Activated naive CD4-positive, alpha-beta T cell treated with anti-CD3 and anti-CD28 coated beads, Interleukin-2, amount 10 ng/mL, durations not matched to agents 7 days and 5 days (primary cell): ENCODE measurements at regions of chr12 and their contacts with region 1.

Region 1: GRCh38 chr12:8045952-8046944 is 13.7 kb downstream of the FOXJ2 start:
- DNase-seq: peak; percentile 89
- H3K4me3 Mint-ChIP-seq: no peak overlapping the region
- H3K27ac Mint-ChIP-seq: no peak overlapping the region
- H3K4me1 Mint-ChIP-seq: peaks cover 9% of the 10 kb centered on the region
- H3K27me3 Mint-ChIP-seq: no peaks in the 10 kb centered on the region

Region 2: DNA sequence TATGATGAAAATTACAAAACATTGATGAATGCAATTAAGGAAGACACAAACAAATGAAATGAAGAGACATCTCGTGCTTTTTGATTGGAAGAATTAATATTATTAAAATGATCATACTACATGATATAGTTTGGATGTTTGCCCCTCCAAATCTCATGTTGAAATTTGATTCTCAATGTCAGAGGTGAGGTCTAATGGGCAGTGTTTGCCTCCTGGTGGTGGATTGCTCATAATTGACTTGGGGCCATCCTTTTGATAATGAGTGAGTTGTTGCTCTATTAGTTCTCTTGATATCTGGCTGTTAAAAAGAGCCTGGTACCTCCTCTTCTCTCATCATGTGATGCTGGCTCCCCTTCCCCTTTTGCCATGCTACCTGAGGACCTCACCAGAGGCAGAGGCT is 659.0 kb before region 1 on chr12:
- CTCF ChIA-PET with region 1: no interaction called
- DNase-seq: no peak
- H3K4me3 Mint-ChIP-seq: no peak overlapping the region
- H3K27ac Mint-ChIP-seq: no peak overlapping the region
- H3K4me1 Mint-ChIP-seq: no peaks in the 10 kb centered on the region
- H3K27me3 Mint-ChIP-seq: no peaks in the 10 kb centered on the region

Region 3: GRCh38 chr12:8057839-8058238 is 11.6 kb after region 1 on chr12:
- CTCF ChIA-PET with region 1: interaction called, 16 read pairs
- DNase-seq: no peak
- H3K4me3 Mint-ChIP-seq: no peak overlapping the region
- H3K27ac Mint-ChIP-seq: no peak overlapping the region
- H3K4me1 Mint-ChIP-seq: no peaks in the 10 kb centered on the region
- H3K27me3 Mint-ChIP-seq: no peaks in the 10 kb centered on the region

Region 4: GRCh38 chr12:8065991-8066594 is 19.8 kb after region 1 on chr12 and contains the start of gene C3AR1:
- CTCF ChIA-PET with region 1: interaction called, 16 read pairs
- DNase-seq: peak; percentile 62
- H3K4me3 Mint-ChIP-seq: peak within 1 kb of the TSS; percentile 56
- H3K27ac Mint-ChIP-seq: peak within 1 kb of the TSS; percentile 86
- H3K4me1 Mint-ChIP-seq: peaks cover 23% of the 10 kb centered on the region
- H3K27me3 Mint-ChIP-seq: no peaks in the 10 kb centered on the region